ENCODE measurements at regions of chr4 and their contacts with region 1.

Region 1: DNA sequence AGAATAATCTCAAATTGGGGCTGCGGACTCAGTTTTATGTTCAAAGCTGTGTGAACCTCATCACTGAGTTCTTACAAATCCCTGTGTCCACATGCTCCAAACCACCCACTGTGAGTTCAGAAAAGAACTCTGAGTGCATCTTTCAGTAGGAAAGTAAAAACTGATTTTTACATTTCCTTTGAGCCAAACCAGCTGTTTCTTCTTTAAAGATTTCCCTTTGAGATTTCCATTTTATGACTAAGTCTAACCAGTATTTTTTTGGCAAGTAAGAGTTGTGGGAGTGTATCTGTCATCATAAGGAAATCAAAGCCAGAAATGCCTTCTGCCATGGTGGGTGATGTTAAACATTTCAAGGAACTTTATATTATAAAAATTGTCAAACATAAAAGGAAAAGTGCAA is 100.0 kb downstream of the TET2 start:
- DNase-seq: no peak
- H3K4me3 ChIP-seq: no peak overlapping the region
- H3K27ac ChIP-seq: no peak overlapping the region
- H3K4me1 ChIP-seq: no peaks in the 10 kb centered on the region
- H3K27me3 ChIP-seq: no peaks in the 10 kb centered on the region
- CTCF ChIP-seq: no peak
- POLR2A ChIP-seq: no peak

Region 2: DNA sequence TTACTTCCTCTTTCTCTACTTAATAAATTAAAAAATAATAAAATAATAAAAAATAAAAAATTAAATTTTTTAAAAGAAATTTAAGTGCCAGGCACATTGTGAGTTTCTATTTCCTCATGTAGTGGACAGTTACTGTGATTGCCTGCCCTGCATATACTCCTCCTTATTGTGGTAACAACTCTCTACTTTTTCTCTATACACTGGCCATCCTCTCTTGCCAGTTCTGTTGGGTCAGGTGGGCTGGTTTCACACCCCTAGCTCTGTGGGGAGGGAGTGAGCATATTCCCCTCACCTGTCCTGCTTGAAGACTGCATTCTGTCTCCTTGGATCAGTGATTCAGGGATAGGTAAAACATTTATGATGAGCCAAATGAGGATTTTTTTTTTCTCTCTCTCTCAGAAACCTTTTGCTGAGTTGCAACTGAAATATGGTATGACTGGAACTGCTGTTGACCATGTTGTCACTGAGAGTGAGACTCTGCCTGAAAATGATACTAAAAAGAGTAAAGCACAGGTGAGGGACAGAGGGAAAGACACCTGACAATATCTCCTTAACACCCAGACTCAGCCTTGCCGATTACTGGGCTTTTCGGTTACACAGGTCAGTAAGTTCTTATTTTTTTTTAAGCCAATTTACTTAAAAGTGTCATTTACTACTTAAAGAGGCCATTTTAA is 789.3 kb before region 1 on chr4:
- intact Hi-C with region 1: loop called (anchors 5 kb)
- DNase-seq: no peak
- H3K4me3 ChIP-seq: no peak overlapping the region
- H3K27ac ChIP-seq: no peak overlapping the region
- H3K4me1 ChIP-seq: no peaks in the 10 kb centered on the region
- H3K27me3 ChIP-seq: no peaks in the 10 kb centered on the region
- CTCF ChIP-seq: no peak
- POLR2A ChIP-seq: no peak

Region 3: DNA sequence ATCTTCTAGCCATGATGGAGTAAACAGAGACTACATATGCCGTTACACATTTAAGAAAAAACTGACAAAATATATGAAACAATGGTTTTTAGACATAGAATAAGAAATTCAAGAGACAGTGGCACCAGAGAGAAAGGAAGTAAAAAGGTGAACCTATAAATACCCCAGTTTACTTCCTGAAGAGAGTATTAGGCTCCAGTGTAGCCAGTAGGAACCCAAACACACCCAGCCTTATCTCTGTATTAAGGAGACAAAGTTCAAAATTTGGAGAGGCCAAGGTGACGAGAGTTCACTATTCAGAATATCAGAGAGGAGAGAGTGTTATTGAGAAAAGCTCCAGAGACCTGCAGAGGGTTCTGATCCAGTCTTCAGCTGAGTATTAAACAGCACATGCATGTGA is 19.0 kb after region 1 on chr4:
- intact Hi-C with region 1: no loop called
- DNase-seq: no peak
- H3K4me3 ChIP-seq: no peak overlapping the region
- H3K27ac ChIP-seq: no peak overlapping the region
- H3K4me1 ChIP-seq: no peaks in the 10 kb centered on the region
- H3K27me3 ChIP-seq: no peaks in the 10 kb centered on the region
- CTCF ChIP-seq: no peak
- POLR2A ChIP-seq: no peak

Region 4: GRCh38 chr4:105758958-105759357 is 512.2 kb after region 1 on chr4:
- intact Hi-C with region 1: no loop called
- DNase-seq: no peak
- H3K4me3 ChIP-seq: no peak overlapping the region
- H3K27ac ChIP-seq: no peak overlapping the region
- H3K4me1 ChIP-seq: no peaks in the 10 kb centered on the region
- H3K27me3 ChIP-seq: no peaks in the 10 kb centered on the region
- CTCF ChIP-seq: no peak
- POLR2A ChIP-seq: no peak

Measured in breast epithelium (tissue), 4 donors.